ENCODE measurements at regions of chr12 and their contacts with region 1.

Region 1: DNA sequence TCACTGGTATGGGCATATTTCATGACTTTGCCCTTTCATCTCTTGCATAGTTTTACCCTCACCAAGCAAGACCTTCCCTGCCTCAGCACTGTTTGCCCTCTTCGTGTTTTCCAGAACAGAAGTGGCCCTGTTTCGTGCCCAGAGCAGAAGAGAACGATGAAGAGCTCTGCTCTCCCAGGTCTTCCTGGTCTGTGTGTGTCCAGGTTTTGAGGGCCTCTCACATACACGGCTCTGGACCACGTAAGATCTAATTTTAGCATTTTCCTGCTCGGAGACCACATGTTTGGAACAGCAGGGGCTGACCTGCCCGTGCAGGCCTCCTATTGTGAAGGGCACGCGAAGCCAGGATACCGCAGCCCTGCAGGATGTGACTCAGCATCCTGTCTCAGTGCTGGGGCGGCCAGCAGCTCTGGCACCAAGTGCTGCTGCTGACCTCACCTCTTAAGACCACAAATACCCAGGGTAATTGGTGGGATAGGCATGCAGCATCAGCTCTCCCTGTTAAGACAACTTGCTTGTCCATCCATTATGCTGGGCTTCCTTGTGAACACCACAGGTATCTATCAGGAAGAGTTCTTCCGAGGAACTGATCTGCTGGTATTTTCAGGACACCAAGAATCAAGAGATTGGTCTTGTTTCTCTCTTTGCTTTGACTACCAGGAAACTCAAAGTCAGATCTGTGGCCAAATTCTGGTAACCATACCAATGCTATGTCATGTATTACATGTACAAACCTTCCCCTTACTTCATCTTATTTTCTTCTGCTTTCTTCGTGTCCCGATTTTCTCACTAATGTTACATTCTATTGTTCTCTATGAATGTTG is 19.0 kb downstream of the SSH1 start:
- DNase-seq: peak in 1 of 2 experiments; percentile 73
- H3K4me3 ChIP-seq: no peak overlapping the region
- H3K27ac ChIP-seq: no peak overlapping the region; the same call in 1 of the 2 replicates
- H3K4me1 ChIP-seq: peaks cover 2 to 14% (median 6%) of the 10 kb centered on the region in 4 experiments; a peak in 5 of 7 replicates
- H3K27me3 ChIP-seq: no peaks in the 10 kb centered on the region
- CTCF ChIP-seq: no peak
- EP300 ChIP-seq: no peak
- POLR2A ChIP-seq: no peak
- RAD21 ChIP-seq: no peak

Region 2: DNA sequence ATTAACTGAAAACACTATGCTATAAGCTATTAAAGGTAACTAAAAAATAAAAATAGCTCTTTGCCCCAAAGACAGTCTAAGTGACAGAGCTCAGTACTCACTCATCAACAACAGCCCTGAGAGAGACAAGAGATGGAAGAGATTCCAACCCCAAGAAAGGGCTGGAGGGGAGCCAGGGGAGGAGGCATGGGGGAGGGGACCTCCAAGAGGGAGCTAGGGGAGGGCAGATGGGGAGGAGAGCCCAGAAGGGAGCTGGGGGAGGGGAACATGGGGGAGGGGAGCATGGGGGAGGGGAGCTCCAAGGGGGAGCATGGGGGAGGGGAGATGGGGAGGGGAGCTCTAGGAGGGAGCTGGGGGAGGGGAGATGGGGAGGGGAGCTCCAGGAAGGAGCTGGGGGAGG is 11.2 kb after region 1 on chr12:
- CTCF ChIA-PET with region 1: interaction called, 14 read pairs
- POLR2A ChIA-PET with region 1: interaction called, 6 read pairs
- DNase-seq: no peak
- H3K4me3 ChIP-seq: no peak overlapping the region
- H3K27ac ChIP-seq: no peak overlapping the region
- H3K4me1 ChIP-seq: no peaks in the 10 kb centered on the region
- H3K27me3 ChIP-seq: no peaks in the 10 kb centered on the region
- CTCF ChIP-seq: no peak
- EP300 ChIP-seq: no peak
- POLR2A ChIP-seq: no peak
- RAD21 ChIP-seq: no peak

Region 3: DNA sequence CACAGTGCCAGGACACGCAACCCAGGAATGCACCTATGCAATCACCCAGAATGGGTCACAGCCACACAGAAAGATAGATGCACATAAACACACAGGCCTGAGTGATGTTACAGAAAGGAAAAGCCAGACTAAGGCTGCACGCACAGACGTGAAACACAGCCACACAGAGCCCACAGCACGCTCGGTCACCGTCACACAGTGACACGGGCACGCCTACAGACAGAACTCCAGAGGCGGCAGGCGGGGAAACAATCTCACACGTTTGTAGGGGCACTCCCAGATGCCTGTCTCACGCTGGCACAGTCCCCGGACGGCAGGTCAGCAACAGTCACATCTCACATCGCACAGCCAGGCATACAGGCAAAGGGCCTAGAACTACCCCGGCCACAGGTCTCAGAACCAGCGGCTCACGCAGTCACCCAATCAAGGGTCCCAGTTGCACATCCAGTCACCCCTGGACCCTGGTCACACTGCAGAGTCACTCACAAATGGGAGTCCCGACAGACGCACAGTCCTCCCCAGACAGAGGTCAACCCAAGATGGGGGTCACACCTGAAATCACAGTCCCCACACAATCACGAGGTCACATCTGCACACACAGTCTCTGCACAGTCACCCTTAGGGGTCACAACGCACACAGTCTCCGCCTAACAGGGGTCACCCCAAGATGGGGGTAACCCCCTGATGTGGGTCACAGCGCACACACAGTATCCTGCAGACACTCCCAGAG is 18.2 kb after region 1 on chr12:
- CTCF ChIA-PET with region 1: no interaction called
- POLR2A ChIA-PET with region 1: interaction called, 10 read pairs
- DNase-seq: peak in 1 of 2 experiments; percentile 67
- H3K4me3 ChIP-seq: peak overlapping the region; percentile 66 to 81 (median 72)
- H3K27ac ChIP-seq: no peak overlapping the region; the same call in 1 of the 2 replicates
- H3K4me1 ChIP-seq: peaks cover 4 to 29% (median 18%) of the 10 kb centered on the region in 4 experiments
- H3K27me3 ChIP-seq: peaks cover 0 to 2% (median 0%) of the 10 kb centered on the region in 4 experiments; a peak in 3 of 7 replicates
- CTCF ChIP-seq: no peak
- EP300 ChIP-seq: no peak
- POLR2A ChIP-seq: no peak
- RAD21 ChIP-seq: no peak

Measured in H1 (cell line).